H1 (cell line): ENCODE measurements at regions of chr11 and their contacts with region 1.

Region 1: GRCh38 chr11:60363542-60364510 is 14.5 kb upstream of the MS4A7 start:
- DNase-seq: peak in 1 of 2 experiments; percentile 77
- H3K4me3 ChIP-seq: peak overlapping the region in 1 of 4 experiments; percentile 38; a peak in 1 of 8 replicates
- H3K27ac ChIP-seq: peak overlapping the region; percentile 45; the same call in 1 of the 2 replicates
- H3K4me1 ChIP-seq: peaks cover 0 to 15% (median 4%) of the 10 kb centered on the region in 4 experiments; a peak in 4 of 7 replicates
- H3K27me3 ChIP-seq: no peaks in the 10 kb centered on the region
- CTCF ChIP-seq: peak in 2 of 3 experiments; percentile 73 to 87; a peak in 3 of 4 replicates
- EP300 ChIP-seq: no peak
- POLR2A ChIP-seq: no peak
- RAD21 ChIP-seq: peak; percentile 78 to 85

Region 2: DNA sequence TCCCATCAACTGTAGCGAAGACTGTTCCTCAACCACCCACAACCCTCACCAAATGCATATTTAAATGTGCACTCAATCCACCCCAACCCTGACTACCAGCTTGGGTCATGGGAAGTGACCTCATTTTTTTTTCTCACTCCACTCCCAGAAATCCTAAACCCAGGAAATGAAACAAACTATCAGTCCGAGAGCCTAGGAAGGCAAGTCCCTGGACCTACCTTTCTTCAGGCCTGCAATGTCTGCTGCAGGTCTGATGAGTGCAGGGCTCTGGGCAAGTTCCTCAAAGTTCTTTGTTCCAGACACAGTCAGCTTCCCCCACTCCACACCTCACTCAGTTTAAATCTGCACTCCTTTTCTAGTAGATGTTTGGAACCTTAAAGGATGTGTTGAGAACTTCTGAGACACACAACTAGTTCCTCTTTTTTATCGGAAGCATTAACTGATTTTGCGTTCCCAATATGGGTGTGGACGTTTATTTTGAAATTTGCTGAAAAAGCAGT is 121.0 kb before region 1 on chr11 and contains the start of gene MS4A4E:
- CTCF ChIA-PET with region 1: no interaction called
- POLR2A ChIA-PET with region 1: no interaction called
- DNase-seq: no peak
- H3K4me3 ChIP-seq: no peak within 1 kb of the TSS
- H3K27ac ChIP-seq: no peak within 1 kb of the TSS
- H3K4me1 ChIP-seq: no peaks in the 10 kb centered on the region
- H3K27me3 ChIP-seq: no peaks in the 10 kb centered on the region
- CTCF ChIP-seq: no peak
- EP300 ChIP-seq: no peak
- POLR2A ChIP-seq: no peak
- RAD21 ChIP-seq: no peak
- total RNA-seq, gene MS4A4E: not detected in 2 replicates

Region 3: GRCh38 chr11:60396799-60397198 is 33.0 kb after region 1 on chr11:
- CTCF ChIA-PET with region 1: interaction called, 11 read pairs
- POLR2A ChIA-PET with region 1: no interaction called
- DNase-seq: no peak
- H3K4me3 ChIP-seq: no peak overlapping the region
- H3K27ac ChIP-seq: no peak overlapping the region
- H3K4me1 ChIP-seq: 0 out of 7 replicates have a peak, but pooled peaks cover 0 to 2% (median 0%) of the 10 kb centered on the region in 4 experiments
- H3K27me3 ChIP-seq: no peaks in the 10 kb centered on the region
- CTCF ChIP-seq: no peak
- EP300 ChIP-seq: no peak
- POLR2A ChIP-seq: no peak
- RAD21 ChIP-seq: no peak

Region 4: DNA sequence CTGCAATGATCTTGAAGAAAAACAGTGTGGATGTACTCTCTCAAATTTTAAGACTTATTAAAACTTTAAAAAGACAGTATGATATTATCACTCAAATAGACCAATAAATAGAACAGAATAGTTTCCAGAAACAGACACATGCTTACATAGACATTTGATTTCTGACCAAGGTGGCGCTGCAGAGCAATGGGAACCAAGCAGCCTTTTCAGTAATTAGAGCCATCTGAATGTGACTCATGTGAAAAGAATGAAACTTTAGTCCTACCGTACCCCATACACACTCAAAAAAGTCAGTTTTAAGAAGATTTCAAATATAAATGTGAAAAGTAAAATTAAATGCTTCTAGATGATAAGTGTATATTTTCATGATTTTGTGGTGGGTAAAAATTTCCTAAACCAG is 261.4 kb after region 1 on chr11:
- CTCF ChIA-PET with region 1: interaction called, 67 read pairs
- POLR2A ChIA-PET with region 1: no interaction called
- DNase-seq: peak in 1 of 2 experiments; percentile 9
- H3K4me3 ChIP-seq: no peak overlapping the region
- H3K27ac ChIP-seq: no peak overlapping the region
- H3K4me1 ChIP-seq: no peaks in the 10 kb centered on the region
- H3K27me3 ChIP-seq: no peaks in the 10 kb centered on the region
- CTCF ChIP-seq: peak in 2 of 3 experiments; percentile 40 to 64; a peak in 3 of 4 replicates
- EP300 ChIP-seq: no peak
- POLR2A ChIP-seq: no peak
- RAD21 ChIP-seq: peak; percentile 15 to 18; a peak in 1 of 4 replicates